GM18951 (cell line): ENCODE measurements at regions of chr1 and their contacts with region 1.

Region 1: DNA sequence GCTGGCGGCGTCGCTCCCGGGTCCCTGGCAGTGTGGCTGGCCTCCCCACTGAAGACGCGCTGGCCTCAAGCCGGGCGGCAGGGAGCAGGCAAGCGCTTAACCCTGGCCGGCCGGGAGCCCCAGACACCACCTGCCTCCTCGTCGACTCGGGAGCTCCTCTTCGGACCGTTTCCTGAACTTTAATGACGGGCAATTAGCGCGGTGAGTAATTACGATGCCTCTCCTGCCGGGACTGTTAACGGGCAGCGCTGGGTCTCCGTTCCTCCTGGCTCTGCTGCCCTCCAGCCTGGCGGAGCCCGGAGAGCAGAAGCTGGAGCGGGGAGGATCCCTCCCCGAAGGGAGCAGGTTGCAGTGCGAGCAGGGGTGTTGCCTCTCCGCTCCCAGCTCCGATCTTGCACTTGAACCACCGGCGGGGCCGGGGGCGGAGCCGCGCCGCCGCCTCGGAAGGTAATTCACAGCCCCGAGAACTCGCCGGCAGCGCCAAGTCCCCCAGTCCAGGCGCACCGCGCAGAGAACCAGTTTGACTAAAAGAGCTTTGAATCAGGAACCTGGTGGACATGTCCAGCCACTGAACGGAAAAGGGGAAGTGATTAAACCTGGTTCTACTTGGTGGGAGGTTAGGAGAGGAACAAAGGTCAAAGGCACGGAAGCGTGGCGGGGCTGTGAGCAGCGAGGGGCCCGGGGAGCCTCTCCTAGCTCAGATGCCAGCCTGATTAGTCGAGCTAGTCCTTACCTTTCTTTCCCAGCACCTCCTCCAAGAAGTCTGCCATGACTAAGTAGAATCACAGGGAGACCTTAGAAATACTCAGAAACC is 18.3 kb upstream of the PLEKHA6 start:
- POLR2A ChIP-seq: no peak

Region 2: GRCh38 chr1:204162231-204163074 is 215.5 kb before region 1 on chr1:
- in situ Hi-C with region 1: loop called (anchors 10 kb)
- POLR2A ChIP-seq: no peak

Region 3: DNA sequence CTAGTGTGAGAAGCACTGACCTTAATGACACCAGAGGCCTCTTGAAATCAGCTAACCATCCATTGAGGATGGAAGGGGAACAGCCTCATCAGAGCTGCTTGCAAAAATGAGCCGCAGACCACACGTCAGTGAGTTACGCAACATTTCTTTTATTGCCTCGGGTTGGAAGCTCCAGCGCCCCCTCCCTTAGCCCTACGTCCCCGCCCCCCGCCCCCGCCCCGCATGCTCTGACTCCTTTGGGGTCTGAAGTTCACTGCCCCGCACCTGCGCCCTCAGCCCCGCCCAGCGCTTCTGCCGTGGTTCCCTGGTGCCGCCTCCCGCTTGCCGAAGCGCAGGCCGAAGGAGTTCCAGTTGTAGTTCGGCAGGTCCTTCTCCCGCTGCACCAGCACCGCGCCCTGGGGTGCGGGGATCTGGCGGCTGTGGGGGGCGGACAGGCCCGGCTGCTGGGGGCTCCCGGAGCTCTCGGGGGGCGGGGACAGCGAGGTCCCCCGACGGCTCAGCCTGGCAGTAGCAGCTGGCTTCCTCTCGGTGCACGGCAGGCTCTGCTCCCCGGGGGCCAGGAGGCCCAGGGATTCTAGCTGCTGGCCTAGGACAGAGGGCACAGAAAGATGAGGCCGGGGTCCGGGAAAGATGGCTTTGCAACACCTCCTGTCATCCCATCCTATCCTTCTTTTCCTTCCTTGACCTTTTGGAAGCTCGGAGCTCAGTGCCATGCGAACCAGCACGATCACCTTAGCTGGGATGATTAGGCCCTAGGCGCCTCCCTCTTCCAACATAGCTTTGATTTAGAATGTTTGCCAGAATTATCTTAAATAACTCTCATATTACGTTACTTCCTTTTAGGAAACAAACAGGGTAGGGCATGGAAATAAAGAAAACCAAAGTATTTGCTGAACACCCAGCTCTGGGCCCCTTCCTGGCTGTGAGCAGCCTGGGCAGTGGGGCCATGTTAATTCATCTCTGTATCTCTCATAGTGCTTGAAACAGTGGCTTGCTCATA is 187.5 kb before region 1 on chr1:
- in situ Hi-C with region 1: no loop called
- POLR2A ChIP-seq: no peak